Pancreas (tissue), 10 donors: ENCODE measurements at regions of chr7 and their contacts with region 1.

Region 1: DNA sequence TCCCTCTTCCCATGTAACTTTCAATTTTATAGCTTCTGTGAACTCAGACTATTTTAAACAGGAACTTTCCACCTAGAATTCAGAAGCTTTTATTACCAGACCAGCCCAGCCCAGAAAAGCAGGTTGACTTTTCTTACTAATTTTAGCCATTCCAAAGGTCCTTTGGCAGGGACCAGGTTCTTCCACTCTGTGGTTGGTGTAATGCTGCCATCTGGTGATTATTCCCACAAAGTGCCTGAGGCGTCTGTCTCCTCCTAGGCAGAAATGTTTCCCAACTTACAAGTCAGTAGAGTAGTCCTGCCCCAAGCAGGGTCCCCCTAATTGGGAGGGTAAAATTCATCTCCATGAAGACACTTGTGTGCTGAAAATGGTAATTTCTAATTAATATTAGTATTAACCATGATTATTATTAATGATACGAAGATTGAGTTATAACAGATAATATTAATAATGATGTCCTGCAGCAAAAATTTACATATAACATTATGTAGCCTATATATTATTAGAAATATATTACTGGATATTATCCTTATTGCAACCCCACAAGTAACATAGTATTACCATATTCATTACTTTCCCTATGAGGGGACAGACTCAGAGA is 53.0 kb upstream of the PPP1R17 start:
- DNase-seq: peak in 4 of 6 donors; percentile 50 to 80 (median 60)
- ATAC-seq: peak; percentile 97 to 100 (median 100)
- H3K4me3 ChIP-seq: no peak overlapping the region
- H3K27ac ChIP-seq: peak overlapping the region in 1 of 4 donors; percentile 48
- H3K4me1 ChIP-seq: peaks cover 6 to 8% (median 6%) of the 10 kb centered on the region in 3 donors
- H3K27me3 ChIP-seq: no peaks in the 10 kb centered on the region
- CTCF ChIP-seq: peak; percentile 34 to 71 (median 60)

Region 2: GRCh38 chr7:31134246-31135188 is 499.5 kb before region 1 on chr7:
- intact Hi-C with region 1: loop called in 1 of 3 experiments (anchors 10 kb)
- DNase-seq: peak; percentile 49 to 80 (median 68)
- ATAC-seq: peak; percentile 91 to 99 (median 98)
- H3K4me3 ChIP-seq: no peak overlapping the region
- H3K27ac ChIP-seq: no peak overlapping the region
- H3K4me1 ChIP-seq: no peaks in the 10 kb centered on the region
- H3K27me3 ChIP-seq: no peaks in the 10 kb centered on the region
- CTCF ChIP-seq: peak; percentile 49 to 82 (median 60)

Region 3: GRCh38 chr7:31373337-31374289 is 260.4 kb before region 1 on chr7:
- intact Hi-C with region 1: loop called in 1 of 3 experiments (anchors 10 kb)
- DNase-seq: peak in 4 of 6 donors; percentile 13 to 61 (median 32)
- ATAC-seq: peak; percentile 73 to 91 (median 87)
- H3K4me3 ChIP-seq: no peak overlapping the region
- H3K27ac ChIP-seq: no peak overlapping the region
- H3K4me1 ChIP-seq: peaks cover 0 to 6% (median 6%) of the 10 kb centered on the region in 3 donors
- H3K27me3 ChIP-seq: no peaks in the 10 kb centered on the region
- CTCF ChIP-seq: peak; percentile 29 to 58 (median 46)

Region 4: GRCh38 chr7:31443457-31443856 is 190.5 kb before region 1 on chr7:
- intact Hi-C with region 1: loop called in 1 of 3 experiments (anchors 5 kb)
- DNase-seq: peak in 1 of 6 donors; percentile 12
- ATAC-seq: peak; percentile 78 to 97 (median 88)
- H3K4me3 ChIP-seq: no peak overlapping the region
- H3K27ac ChIP-seq: no peak overlapping the region
- H3K4me1 ChIP-seq: no peaks in the 10 kb centered on the region
- H3K27me3 ChIP-seq: no peaks in the 10 kb centered on the region
- CTCF ChIP-seq: peak; percentile 69 to 78 (median 73)

Region 5: DNA sequence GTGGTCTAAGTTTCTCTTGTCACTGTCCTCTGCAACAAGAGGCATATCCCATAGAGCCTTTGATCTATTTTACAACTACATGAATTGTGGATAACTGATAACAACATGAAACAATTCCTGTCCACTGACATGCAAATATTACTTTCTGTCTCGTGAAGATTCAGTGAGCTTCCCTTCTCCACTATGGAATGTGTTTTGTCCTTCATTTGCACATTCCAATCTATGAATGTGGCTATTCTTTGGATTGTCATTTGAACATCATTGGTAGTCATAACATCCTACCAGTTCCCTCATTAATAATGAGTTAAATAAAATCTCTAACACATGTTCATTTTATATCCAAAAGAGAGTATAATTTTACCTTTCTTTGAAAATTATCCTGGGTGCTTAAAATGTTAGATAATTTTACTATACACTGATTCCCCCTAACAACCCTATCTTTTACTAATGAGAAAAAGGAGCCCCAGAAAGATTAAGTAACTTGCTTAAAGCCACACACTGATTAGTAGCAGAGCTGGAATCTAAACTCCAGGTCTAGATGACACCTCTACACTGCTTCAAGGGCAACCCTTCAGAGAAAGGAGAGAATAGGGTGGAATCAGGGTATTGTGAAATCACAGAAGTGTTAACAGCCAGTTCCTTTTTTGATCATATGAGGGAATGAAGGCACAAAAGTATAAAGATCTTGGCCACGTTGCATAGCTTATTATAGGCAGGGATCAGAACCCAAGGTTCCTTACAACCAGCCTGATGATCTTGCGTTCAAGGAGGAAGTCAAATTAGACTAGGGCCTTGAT is 397.1 kb after region 1 on chr7:
- intact Hi-C with region 1: no loop called
- DNase-seq: no peak
- ATAC-seq: no peak
- H3K4me3 ChIP-seq: no peak overlapping the region
- H3K27ac ChIP-seq: no peak overlapping the region
- H3K4me1 ChIP-seq: peaks cover 0 to 9% (median 0%) of the 10 kb centered on the region in 3 donors
- H3K27me3 ChIP-seq: no peaks in the 10 kb centered on the region
- CTCF ChIP-seq: no peak